Panc1 (cell line): ENCODE measurements at regions of chr1 and their contacts with region 1.

Region 1: GRCh38 chr1:231211005-231211857 is 29.8 kb upstream of the GNPAT start:
- DNase-seq: peak; percentile 59
- ATAC-seq: peak; percentile 94
- H3K4me3 ChIP-seq: peak overlapping the region; percentile 56 to 69
- H3K27ac ChIP-seq: no peak overlapping the region; the same call in 1 of the 2 replicates
- H3K4me1 ChIP-seq: 0 out of 2 replicates have a peak, but pooled peaks cover 3% of the 10 kb centered on the region
- H3K27me3 ChIP-seq: no peaks in the 10 kb centered on the region
- CTCF ChIP-seq: peak; percentile 94

Region 2: GRCh38 chr1:230797942-230798418 is 413.3 kb before region 1 on chr1:
- CTCF ChIA-PET with region 1: interaction called, 3 read pairs
- POLR2A ChIA-PET with region 1: no interaction called
- in situ Hi-C with region 1: no loop called
- intact Hi-C with region 1: loop called (anchors 1 kb)
- DNase-seq: peak; percentile 28
- ATAC-seq: peak; percentile 95
- H3K4me3 ChIP-seq: no peak overlapping the region
- H3K27ac ChIP-seq: no peak overlapping the region
- H3K4me1 ChIP-seq: no peaks in the 10 kb centered on the region
- H3K27me3 ChIP-seq: no peaks in the 10 kb centered on the region
- CTCF ChIP-seq: peak; percentile 88

Region 3: DNA sequence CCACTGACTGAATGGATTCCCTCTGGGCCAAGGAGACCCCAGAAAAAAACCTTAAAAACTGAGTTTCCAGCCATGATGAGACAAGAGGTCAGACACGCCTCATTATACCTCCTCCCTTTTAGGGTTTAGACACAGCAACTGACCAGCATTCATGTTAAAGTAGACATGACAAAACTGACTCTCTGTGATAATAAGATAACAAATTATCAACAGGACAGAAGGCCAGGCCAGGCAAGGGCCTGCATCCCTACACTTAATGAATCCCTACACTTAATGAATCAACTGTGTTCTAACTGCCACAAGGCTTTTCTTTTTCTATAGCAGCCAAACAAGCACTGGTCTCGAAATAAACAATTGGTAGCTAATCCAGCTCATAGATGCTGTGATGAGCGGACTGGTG is 137.9 kb before region 1 on chr1:
- CTCF ChIA-PET with region 1: no interaction called
- POLR2A ChIA-PET with region 1: no interaction called
- in situ Hi-C with region 1: no loop called
- intact Hi-C with region 1: no loop called
- DNase-seq: no peak
- ATAC-seq: no peak
- H3K4me3 ChIP-seq: no peak overlapping the region
- H3K27ac ChIP-seq: no peak overlapping the region
- H3K4me1 ChIP-seq: no peaks in the 10 kb centered on the region
- H3K27me3 ChIP-seq: peaks cover 3% of the 10 kb centered on the region; the same call in 1 of the 2 replicates
- CTCF ChIP-seq: no peak

Region 4: DNA sequence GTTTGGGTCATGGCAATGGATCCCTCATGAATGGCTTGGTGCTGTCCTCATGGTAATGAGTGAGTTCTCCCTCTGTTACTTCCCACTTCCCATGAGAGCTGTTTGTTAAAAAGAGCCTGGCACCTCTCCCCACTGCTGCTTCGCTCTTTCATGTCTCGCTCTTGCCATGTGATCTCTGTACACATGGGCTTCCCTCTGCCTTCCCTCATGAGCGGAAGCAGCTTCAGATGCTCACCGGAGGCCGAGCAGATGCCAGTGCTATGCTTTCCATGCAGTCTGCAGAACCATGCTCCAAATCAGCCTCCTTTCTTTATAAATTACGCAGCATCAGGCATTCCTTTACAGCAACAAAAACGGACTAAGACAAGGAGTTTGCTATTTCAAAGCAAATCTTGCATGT is 14.9 kb after region 1 on chr1:
- CTCF ChIA-PET with region 1: no interaction called
- POLR2A ChIA-PET with region 1: no interaction called
- in situ Hi-C with region 1: no loop called
- intact Hi-C with region 1: no loop called
- DNase-seq: no peak
- ATAC-seq: no peak
- H3K4me3 ChIP-seq: no peak overlapping the region
- H3K27ac ChIP-seq: no peak overlapping the region
- H3K4me1 ChIP-seq: no peaks in the 10 kb centered on the region
- H3K27me3 ChIP-seq: no peaks in the 10 kb centered on the region
- CTCF ChIP-seq: no peak